ENCODE measurements at regions of chr19 and their contacts with region 1.

Region 1: DNA sequence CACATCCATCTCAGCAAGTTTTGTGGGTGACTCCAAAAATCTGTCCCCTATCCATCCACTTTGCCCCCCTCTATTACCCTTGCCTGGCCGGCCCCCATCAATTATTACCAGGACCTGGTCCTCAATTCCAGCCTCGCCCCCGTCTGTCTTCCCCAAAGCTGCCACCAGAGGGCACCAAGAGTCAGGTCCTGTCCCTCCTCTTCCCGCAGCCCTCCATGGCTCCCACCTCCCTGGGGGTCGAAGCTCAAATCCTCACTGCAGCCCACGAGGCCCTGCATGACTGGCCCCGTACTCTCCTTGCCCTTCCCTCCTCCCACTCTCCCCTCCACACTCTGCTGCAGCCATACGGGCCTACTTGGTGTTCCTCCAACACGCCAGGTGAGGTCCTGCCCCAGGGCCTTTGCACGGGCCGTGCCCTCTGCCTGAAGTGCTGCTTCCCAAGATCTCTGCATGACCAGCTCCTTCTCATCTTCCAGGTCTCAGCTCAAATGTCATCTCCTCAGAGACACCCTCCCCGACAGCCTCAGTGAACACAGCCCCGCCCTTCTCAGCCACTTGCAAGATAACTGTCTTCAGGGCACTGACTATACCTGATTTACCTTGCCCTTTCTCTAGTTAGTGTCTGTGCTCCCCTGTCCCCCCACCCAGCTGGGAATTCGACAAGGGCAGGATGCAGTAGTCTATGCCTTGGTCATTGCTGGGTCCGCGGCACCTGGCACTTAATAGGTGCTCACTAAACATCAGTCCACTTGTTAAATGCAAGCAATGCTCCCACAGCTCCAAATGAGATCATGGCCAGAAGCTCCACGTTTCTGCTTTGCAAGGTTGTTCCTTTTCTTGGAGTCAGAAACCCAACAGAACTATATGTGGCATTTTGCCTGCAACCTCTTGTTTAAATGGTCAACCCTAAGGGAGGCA is 16.8 kb upstream of the SEMA6B start:
- DNase-seq: peak; percentile 48 to 70 (median 62)
- H3K4me3 ChIP-seq: no peak overlapping the region
- H3K4me3 Mint-ChIP-seq: peak overlapping the region in 1 of 2 donors; percentile 67
- H3K27ac ChIP-seq: no peak overlapping the region
- H3K27ac Mint-ChIP-seq: peak overlapping the region in 5 of 7 donors; percentile 18 to 80 (median 63)
- H3K4me1 ChIP-seq: no peaks in the 10 kb centered on the region
- H3K4me1 Mint-ChIP-seq: peaks cover 12% of the 10 kb centered on the region
- H3K27me3 ChIP-seq: peaks cover 14 to 70% of the 10 kb centered on the region in 2 donors
- H3K27me3 Mint-ChIP-seq: peaks cover 48 to 74% (median 68%) of the 10 kb centered on the region in 3 donors
- CTCF ChIP-seq: peak; percentile 90

Region 2: DNA sequence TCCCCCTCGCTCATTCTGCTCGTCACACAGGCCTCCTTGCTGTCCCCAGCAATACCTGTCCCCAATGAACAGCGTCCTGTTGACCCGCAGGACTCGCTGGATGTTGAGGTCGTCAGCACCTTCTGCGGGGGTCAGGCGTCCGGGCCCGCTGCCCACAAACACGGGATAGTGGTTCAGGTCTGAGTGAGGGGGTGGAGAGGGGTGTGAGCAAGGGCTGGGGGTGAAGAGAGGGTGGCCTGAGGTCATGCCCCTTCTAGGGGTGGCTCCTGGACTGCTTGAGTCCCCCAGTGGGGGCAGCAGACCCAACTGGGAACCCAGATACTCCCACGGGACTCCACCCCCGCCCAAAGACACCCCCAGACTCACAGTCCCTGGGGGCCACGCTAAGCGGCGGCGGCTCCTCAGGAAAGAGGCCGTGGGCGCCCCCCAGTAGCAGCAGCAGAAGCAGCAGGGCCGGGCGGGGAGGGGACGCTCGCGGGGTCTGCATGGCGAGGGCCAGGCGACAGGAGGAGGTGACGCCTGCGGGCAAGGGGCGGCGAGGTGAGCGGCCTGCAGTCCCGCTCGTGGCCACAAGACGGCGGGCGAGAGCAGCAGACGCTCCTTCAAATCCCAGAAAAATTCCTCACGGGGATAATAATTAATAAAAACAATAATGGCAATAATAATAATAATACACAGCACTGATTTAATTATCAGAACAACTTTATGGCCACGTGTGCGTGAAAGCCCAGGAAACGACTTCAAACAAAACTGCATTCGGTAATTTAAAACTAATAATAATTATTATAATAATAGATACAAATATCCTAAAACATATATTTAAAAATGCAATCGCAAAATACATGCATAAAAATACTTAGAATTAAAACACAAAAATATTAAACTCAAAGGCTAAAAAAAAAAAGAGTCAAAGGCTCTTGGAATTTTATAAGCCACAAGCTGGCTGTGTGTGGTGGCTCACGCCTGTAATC is 18.0 kb before region 1 on chr19:
- intact Hi-C with region 1: loop called in 1 of 2 experiments (anchors 2 kb)
- DNase-seq: peak in 2 of 3 donors; percentile 58 to 61
- H3K4me3 ChIP-seq: peak overlapping the region in 1 of 3 experiments; percentile 49
- H3K4me3 Mint-ChIP-seq: peak overlapping the region in 1 of 2 donors; percentile 66
- H3K27ac ChIP-seq: peak overlapping the region in 1 of 2 donors; percentile 83
- H3K27ac Mint-ChIP-seq: peak overlapping the region in 5 of 7 donors; percentile 84 to 98 (median 97)
- H3K4me1 ChIP-seq: peaks cover 47 to 58% of the 10 kb centered on the region in 2 donors
- H3K4me1 Mint-ChIP-seq: peaks cover 47% of the 10 kb centered on the region
- H3K27me3 ChIP-seq: no peaks in the 10 kb centered on the region
- H3K27me3 Mint-ChIP-seq: peaks cover 0 to 12% (median 2%) of the 10 kb centered on the region in 3 donors
- CTCF ChIP-seq: peak; percentile 100

Region 3: GRCh38 chr19:4633140-4633967 is 57.1 kb after region 1 on chr19:
- intact Hi-C with region 1: loop called (anchors 5 kb)
- DNase-seq: peak; percentile 92 to 96 (median 96)
- H3K4me3 ChIP-seq: peak overlapping the region in 1 of 3 experiments; percentile 21
- H3K4me3 Mint-ChIP-seq: peak overlapping the region; percentile 31 to 67
- H3K27ac ChIP-seq: peak overlapping the region; percentile 74 to 83
- H3K27ac Mint-ChIP-seq: peak overlapping the region; percentile 86 to 94 (median 89)
- H3K4me1 ChIP-seq: peaks cover 45 to 49% of the 10 kb centered on the region in 2 donors
- H3K4me1 Mint-ChIP-seq: peaks cover 46% of the 10 kb centered on the region
- H3K27me3 ChIP-seq: no peaks in the 10 kb centered on the region
- H3K27me3 Mint-ChIP-seq: peaks cover 1 to 16% (median 12%) of the 10 kb centered on the region in 3 donors
- CTCF ChIP-seq: peak; percentile 87

Region 4: DNA sequence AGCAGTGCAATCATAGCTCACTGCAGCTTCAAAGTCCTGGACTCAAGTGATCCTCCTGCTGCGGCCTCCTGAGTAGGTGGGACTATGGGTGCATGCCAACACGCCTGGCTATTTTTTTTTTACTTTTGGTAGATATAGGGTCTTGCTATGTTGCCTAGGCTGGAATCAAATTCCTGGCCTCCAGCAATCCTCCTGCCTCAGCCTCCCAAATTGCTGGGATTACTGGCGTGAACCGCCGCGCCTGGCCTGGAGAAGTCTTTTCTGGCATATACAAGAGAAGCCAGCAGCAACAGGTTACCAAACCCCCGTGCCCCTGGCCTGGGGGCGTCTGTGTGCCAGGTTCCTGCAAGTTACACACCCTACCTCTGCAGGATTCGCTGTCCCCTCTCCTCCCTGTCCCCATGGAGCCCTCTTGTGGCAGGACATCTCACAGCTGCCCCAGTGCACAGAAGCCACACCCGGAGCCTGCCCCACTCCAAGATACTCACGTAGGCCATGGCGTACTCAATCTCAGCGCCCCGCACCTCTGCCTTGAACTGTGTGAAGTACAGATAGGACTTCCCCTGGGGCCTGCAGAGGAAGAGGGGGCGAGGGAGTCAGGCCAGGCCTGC is 84.0 kb after region 1 on chr19:
- intact Hi-C with region 1: no loop called
- DNase-seq: no peak
- H3K4me3 ChIP-seq: no peak overlapping the region
- H3K4me3 Mint-ChIP-seq: no peak overlapping the region
- H3K27ac ChIP-seq: no peak overlapping the region
- H3K27ac Mint-ChIP-seq: no peak overlapping the region
- H3K4me1 ChIP-seq: no peaks in the 10 kb centered on the region
- H3K4me1 Mint-ChIP-seq: no peaks in the 10 kb centered on the region
- H3K27me3 ChIP-seq: no peaks in the 10 kb centered on the region
- H3K27me3 Mint-ChIP-seq: peaks cover 0 to 4% (median 0%) of the 10 kb centered on the region in 3 donors
- CTCF ChIP-seq: no peak